GM23248 (cell line): ENCODE measurements at regions of chr2 and their contacts with region 1.

Region 1: GRCh38 chr2:41869542-41870264 is 178.1 kb upstream of the PKDCC start:
- DNase-seq: peak; percentile 66
- H3K4me3 ChIP-seq: no peak overlapping the region
- H3K27ac ChIP-seq: no peak overlapping the region
- H3K4me1 ChIP-seq: peaks cover 22% of the 10 kb centered on the region
- H3K27me3 ChIP-seq: no peaks in the 10 kb centered on the region

Region 2: DNA sequence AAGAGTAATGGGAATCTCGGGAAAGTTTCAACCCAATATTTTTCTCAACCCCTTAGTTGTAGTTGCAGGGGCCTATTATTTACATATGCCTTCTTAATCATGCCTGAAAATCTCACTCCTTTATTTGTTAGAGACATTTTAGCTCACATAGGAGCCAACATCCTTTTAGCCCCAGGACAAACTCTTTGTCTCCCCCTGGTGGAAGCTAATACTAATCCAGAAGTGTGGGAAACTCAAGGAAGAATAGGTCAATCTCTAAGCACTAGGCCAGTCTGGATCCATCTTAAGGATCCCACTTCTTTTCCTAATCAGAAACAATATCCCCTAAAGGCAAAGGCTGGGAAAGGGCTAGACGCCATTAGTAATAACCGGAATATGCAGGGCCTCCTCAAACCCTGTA is 372.8 kb before region 1 on chr2:
- in situ Hi-C with region 1: no loop called
- DNase-seq: no peak
- H3K4me3 ChIP-seq: no peak overlapping the region
- H3K27ac ChIP-seq: no peak overlapping the region
- H3K4me1 ChIP-seq: no peaks in the 10 kb centered on the region
- H3K27me3 ChIP-seq: no peaks in the 10 kb centered on the region

Region 3: GRCh38 chr2:42086500-42086953 is 216.8 kb after region 1 on chr2:
- in situ Hi-C with region 1: loop called (anchors 5 kb)
- DNase-seq: peak; percentile 75
- H3K4me3 ChIP-seq: no peak overlapping the region
- H3K27ac ChIP-seq: no peak overlapping the region
- H3K4me1 ChIP-seq: no peaks in the 10 kb centered on the region
- H3K27me3 ChIP-seq: no peaks in the 10 kb centered on the region

Region 4: GRCh38 chr2:42293019-42293418 is 423.3 kb after region 1 on chr2:
- in situ Hi-C with region 1: no loop called
- DNase-seq: no peak
- H3K4me3 ChIP-seq: no peak overlapping the region
- H3K27ac ChIP-seq: no peak overlapping the region
- H3K4me1 ChIP-seq: peaks cover 5% of the 10 kb centered on the region
- H3K27me3 ChIP-seq: no peaks in the 10 kb centered on the region

Region 5: GRCh38 chr2:42314892-42315467 is 445.3 kb after region 1 on chr2:
- in situ Hi-C with region 1: loop called (anchors 25 kb)
- DNase-seq: peak; percentile 93
- H3K4me3 ChIP-seq: 0 out of 2 replicates have a peak overlapping the region, but pooled peaks have one; percentile 14
- H3K27ac ChIP-seq: peak overlapping the region; percentile 67
- H3K4me1 ChIP-seq: peaks cover 24% of the 10 kb centered on the region
- H3K27me3 ChIP-seq: no peaks in the 10 kb centered on the region